ENCODE measurements at regions of chr3 and their contacts with region 1.

Region 1: GRCh38 chr3:27312044-27312668 is 57.0 kb downstream of the NEK10 start:
- DNase-seq: peak in 1 of 2 donors; percentile 74
- ATAC-seq: peak; percentile 60 to 77 (median 74)
- H3K4me3 ChIP-seq: no peak overlapping the region
- H3K4me3 Mint-ChIP-seq: no peak overlapping the region
- H3K27ac ChIP-seq: no peak overlapping the region
- H3K27ac Mint-ChIP-seq: no peak overlapping the region
- H3K4me1 ChIP-seq: no peaks in the 10 kb centered on the region
- H3K4me1 Mint-ChIP-seq: no peaks in the 10 kb centered on the region
- H3K27me3 ChIP-seq: no peaks in the 10 kb centered on the region
- H3K27me3 Mint-ChIP-seq: no peaks in the 10 kb centered on the region
- CTCF ChIP-seq: peak; percentile 84

Region 2: DNA sequence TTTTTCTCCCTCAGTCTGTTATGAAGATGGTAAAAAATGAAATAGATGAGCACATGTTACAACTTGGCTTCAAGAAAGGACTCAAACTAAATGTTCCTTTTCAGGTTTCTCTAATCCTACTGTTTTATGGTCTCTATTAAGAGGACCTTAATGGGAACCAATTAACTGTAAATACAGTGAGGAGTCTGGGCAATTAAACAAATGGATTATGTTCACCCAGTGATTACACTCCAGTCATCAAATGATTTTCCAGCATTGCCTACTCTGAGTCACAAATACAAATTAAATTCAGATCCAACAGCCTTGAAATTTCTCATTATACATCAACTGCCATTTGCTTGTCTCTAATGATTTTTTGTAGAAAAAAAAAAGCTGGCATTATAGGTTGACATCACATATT is 72.2 kb before region 1 on chr3:
- intact Hi-C with region 1: no loop called
- DNase-seq: no peak
- ATAC-seq: no peak
- H3K4me3 ChIP-seq: no peak overlapping the region
- H3K4me3 Mint-ChIP-seq: no peak overlapping the region
- H3K27ac ChIP-seq: no peak overlapping the region
- H3K27ac Mint-ChIP-seq: no peak overlapping the region
- H3K4me1 ChIP-seq: no peaks in the 10 kb centered on the region
- H3K4me1 Mint-ChIP-seq: no peaks in the 10 kb centered on the region
- H3K27me3 ChIP-seq: no peaks in the 10 kb centered on the region
- H3K27me3 Mint-ChIP-seq: no peaks in the 10 kb centered on the region
- CTCF ChIP-seq: no peak

Region 3: DNA sequence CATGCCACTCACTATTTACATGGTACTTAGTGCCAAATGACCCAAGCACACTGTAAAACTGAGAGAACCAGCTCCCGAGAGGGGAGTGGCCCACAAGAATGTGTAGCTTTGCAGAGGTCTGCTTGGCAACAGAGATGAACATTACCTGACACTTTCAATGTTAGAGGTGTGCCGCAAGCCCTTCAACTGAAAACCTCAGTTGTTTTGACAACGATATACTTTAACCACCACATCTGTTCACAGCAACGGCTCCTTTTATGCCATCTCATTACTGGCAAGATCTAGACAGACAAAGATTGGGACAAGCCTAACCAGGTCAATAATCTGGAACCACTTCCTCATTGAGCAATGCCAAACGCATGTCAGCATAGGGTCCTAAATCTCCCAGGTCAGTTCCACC is 33.3 kb after region 1 on chr3:
- intact Hi-C with region 1: no loop called
- DNase-seq: peak in 1 of 2 donors; percentile 43
- ATAC-seq: peak; percentile 68 to 80 (median 78)
- H3K4me3 ChIP-seq: no peak overlapping the region
- H3K4me3 Mint-ChIP-seq: no peak overlapping the region
- H3K27ac ChIP-seq: no peak overlapping the region
- H3K27ac Mint-ChIP-seq: no peak overlapping the region
- H3K4me1 ChIP-seq: no peaks in the 10 kb centered on the region
- H3K4me1 Mint-ChIP-seq: peaks cover 21 to 24% of the 10 kb centered on the region in 2 donors
- H3K27me3 ChIP-seq: no peaks in the 10 kb centered on the region
- H3K27me3 Mint-ChIP-seq: no peaks in the 10 kb centered on the region
- CTCF ChIP-seq: no peak

Region 4: GRCh38 chr3:27467545-27467944 is 155.4 kb after region 1 on chr3:
- intact Hi-C with region 1: loop called (anchors 1 kb)
- DNase-seq: peak in 1 of 2 donors; percentile 68
- ATAC-seq: peak; percentile 86 to 97 (median 96)
- H3K4me3 ChIP-seq: no peak overlapping the region
- H3K4me3 Mint-ChIP-seq: no peak overlapping the region
- H3K27ac ChIP-seq: no peak overlapping the region
- H3K27ac Mint-ChIP-seq: peak overlapping the region; percentile 34 to 48
- H3K4me1 ChIP-seq: no peaks in the 10 kb centered on the region
- H3K4me1 Mint-ChIP-seq: peaks cover 7 to 14% of the 10 kb centered on the region in 2 donors
- H3K27me3 ChIP-seq: no peaks in the 10 kb centered on the region
- H3K27me3 Mint-ChIP-seq: no peaks in the 10 kb centered on the region
- CTCF ChIP-seq: peak; percentile 62

Region 5: GRCh38 chr3:27659279-27660021 is 347.3 kb after region 1 on chr3:
- intact Hi-C with region 1: loop called (anchors 1 kb)
- DNase-seq: peak; percentile 37 to 72
- ATAC-seq: peak; percentile 58 to 82 (median 70)
- H3K4me3 ChIP-seq: no peak overlapping the region
- H3K4me3 Mint-ChIP-seq: no peak overlapping the region
- H3K27ac ChIP-seq: no peak overlapping the region
- H3K27ac Mint-ChIP-seq: no peak overlapping the region
- H3K4me1 ChIP-seq: no peaks in the 10 kb centered on the region
- H3K4me1 Mint-ChIP-seq: no peaks in the 10 kb centered on the region
- H3K27me3 ChIP-seq: no peaks in the 10 kb centered on the region
- H3K27me3 Mint-ChIP-seq: no peaks in the 10 kb centered on the region
- CTCF ChIP-seq: peak; percentile 91

Region 6: DNA sequence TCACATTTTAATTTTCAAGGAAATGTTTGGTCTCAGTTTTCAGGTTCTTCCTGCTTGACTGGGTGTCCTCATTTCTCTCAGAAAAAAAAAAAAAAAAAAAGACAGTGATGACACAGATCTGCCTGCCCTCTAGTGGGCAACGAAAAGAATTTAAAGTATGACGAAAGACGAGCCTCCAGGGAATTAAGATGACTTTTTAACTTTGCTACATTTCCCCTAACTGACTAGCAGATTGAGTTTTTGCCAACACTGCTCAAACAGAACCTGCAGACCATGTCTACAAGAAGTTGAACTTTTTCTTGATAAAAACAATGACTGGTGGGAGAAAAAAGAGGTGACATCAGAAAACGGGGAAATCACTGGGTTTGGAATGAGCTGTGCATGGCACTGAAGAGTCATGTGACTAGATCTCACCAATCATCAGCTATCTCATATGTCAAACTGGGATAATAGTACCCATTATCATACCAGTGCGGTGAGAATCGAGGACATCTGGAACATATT is 369.1 kb after region 1 on chr3:
- intact Hi-C with region 1: loop called (anchors 1 kb)
- DNase-seq: peak in 1 of 2 donors; percentile 85
- ATAC-seq: peak; percentile 73 to 89 (median 88)
- H3K4me3 ChIP-seq: no peak overlapping the region
- H3K4me3 Mint-ChIP-seq: peak overlapping the region; percentile 47
- H3K27ac ChIP-seq: no peak overlapping the region
- H3K27ac Mint-ChIP-seq: peak overlapping the region in 1 of 2 donors; percentile 58
- H3K4me1 ChIP-seq: peaks cover 4% of the 10 kb centered on the region
- H3K4me1 Mint-ChIP-seq: peaks cover 6% of the 10 kb centered on the region in 2 donors
- H3K27me3 ChIP-seq: no peaks in the 10 kb centered on the region
- H3K27me3 Mint-ChIP-seq: peaks cover 2 to 10% of the 10 kb centered on the region in 2 donors
- CTCF ChIP-seq: peak; percentile 87

Region 7: GRCh38 chr3:28334552-28334951 is 1022.4 kb after region 1 on chr3:
- intact Hi-C with region 1: loop called (anchors 5 kb)
- DNase-seq: no peak
- ATAC-seq: no peak
- H3K4me3 ChIP-seq: no peak overlapping the region
- H3K4me3 Mint-ChIP-seq: no peak overlapping the region
- H3K27ac ChIP-seq: no peak overlapping the region
- H3K27ac Mint-ChIP-seq: peak overlapping the region in 1 of 2 donors; percentile 45
- H3K4me1 ChIP-seq: no peaks in the 10 kb centered on the region
- H3K4me1 Mint-ChIP-seq: peaks cover 0 to 6% of the 10 kb centered on the region in 2 donors
- H3K27me3 ChIP-seq: no peaks in the 10 kb centered on the region
- H3K27me3 Mint-ChIP-seq: no peaks in the 10 kb centered on the region
- CTCF ChIP-seq: peak; percentile 37

Measured in natural killer cell (primary cell).